Psoas muscle (tissue), 8 donors: ENCODE measurements at regions of chr1 and their contacts with region 1.

Region 1: GRCh38 chr1:113452921-113453770 is 62.8 kb downstream of the MAGI3 start:
- DNase-seq: no peak
- ATAC-seq: peak in 2 of 4 donors; percentile 52 to 54
- H3K4me3 ChIP-seq: no peak overlapping the region
- H3K27ac ChIP-seq: no peak overlapping the region
- H3K4me1 ChIP-seq: no peaks in the 10 kb centered on the region
- H3K27me3 ChIP-seq: no peaks in the 10 kb centered on the region
- CTCF ChIP-seq: peak; percentile 43

Region 2: GRCh38 chr1:113140588-113141446 is 312.3 kb before region 1 on chr1:
- intact Hi-C with region 1: loop called (anchors 5 to 10 kb)
- DNase-seq: peak; percentile 40 to 55
- ATAC-seq: peak; percentile 80 to 95 (median 88)
- H3K4me3 ChIP-seq: peak overlapping the region; percentile 33
- H3K27ac ChIP-seq: no peak overlapping the region
- H3K4me1 ChIP-seq: no peaks in the 10 kb centered on the region
- H3K27me3 ChIP-seq: no peaks in the 10 kb centered on the region
- CTCF ChIP-seq: peak; percentile 82